AG04450 (cell line): ENCODE measurements at regions of chr14 and their contacts with region 1.

Region 1: DNA sequence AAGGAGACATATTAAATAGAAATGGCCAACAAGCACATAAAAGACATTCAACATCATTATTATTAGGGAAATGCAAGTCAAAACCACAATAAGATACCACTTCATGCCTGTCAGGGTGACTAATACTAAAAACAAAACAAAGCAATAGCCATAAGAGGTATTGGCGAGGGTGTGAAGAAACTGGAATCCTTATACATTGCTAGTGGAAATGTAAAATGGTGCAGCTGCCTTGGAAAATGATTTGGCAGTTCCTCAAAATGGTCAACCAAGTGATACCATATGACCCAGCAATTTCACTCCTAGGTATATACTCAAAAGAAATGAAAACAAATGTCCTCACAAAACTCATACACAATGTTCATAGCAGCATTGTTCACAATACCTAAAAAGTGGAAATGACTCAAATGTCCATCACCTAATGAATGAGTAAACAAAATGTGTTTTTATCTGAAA is 27.0 kb downstream of the GPR135 start:
- DNase-seq: no peak
- H3K4me3 ChIP-seq: no peak overlapping the region
- H3K27ac ChIP-seq: no peak overlapping the region
- H3K27me3 ChIP-seq: no peaks in the 10 kb centered on the region
- CTCF ChIP-seq: no peak

Region 2: GRCh38 chr14:59126710-59127432 is 311.4 kb before region 1 on chr14:
- CTCF ChIA-PET with region 1: interaction called, 93 read pairs
- POLR2A ChIA-PET with region 1: interaction called, 4 read pairs
- DNase-seq: no peak
- H3K4me3 ChIP-seq: no peak overlapping the region
- H3K27ac ChIP-seq: no peak overlapping the region
- H3K27me3 ChIP-seq: no peaks in the 10 kb centered on the region
- CTCF ChIP-seq: peak; percentile 75

Region 3: DNA sequence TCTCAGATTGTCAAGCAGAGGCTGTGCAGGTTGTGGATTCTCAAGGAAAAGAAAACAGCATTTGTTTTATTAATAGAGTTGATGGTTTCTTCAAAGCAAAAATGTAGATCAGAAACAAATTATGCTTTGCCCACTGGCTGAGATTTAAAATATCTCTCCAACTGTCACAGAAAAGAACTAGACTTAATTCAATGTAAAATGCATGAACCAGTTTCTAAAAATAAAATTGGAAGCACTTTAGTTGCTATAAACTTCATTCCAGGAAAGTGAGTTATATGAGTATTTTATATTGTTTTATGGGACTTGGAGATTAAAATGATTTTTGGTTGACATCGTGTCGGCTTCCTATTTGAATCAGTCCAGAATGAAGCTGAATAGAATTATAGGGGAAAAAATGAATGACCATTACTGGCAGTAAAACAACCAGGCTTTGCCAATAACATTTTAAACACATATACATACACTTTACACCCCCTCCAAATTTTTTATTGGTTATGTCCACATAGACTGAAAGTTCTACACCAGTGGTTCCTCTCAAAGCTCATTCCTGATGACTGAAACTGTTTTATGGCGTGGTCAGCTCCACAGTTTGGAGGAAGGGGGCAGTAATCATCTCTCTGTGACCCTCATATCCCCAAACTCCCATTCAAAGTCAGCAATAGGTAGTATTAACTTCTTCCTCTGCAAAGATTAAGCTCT is 305.3 kb before region 1 on chr14:
- CTCF ChIA-PET with region 1: interaction called, 70 read pairs
- POLR2A ChIA-PET with region 1: interaction called, 4 read pairs
- DNase-seq: no peak
- H3K4me3 ChIP-seq: no peak overlapping the region
- H3K27ac ChIP-seq: no peak overlapping the region
- H3K27me3 ChIP-seq: peaks cover 6% of the 10 kb centered on the region
- CTCF ChIP-seq: peak; percentile 32

Region 4: GRCh38 chr14:59454131-59454530 is 15.9 kb after region 1 on chr14:
- CTCF ChIA-PET with region 1: no interaction called
- POLR2A ChIA-PET with region 1: no interaction called
- DNase-seq: peak; percentile 76
- H3K4me3 ChIP-seq: no peak overlapping the region
- H3K27ac ChIP-seq: no peak overlapping the region
- H3K27me3 ChIP-seq: no peaks in the 10 kb centered on the region
- CTCF ChIP-seq: no peak

Region 5: GRCh38 chr14:59534361-59534987 is 96.3 kb after region 1 on chr14:
- CTCF ChIA-PET with region 1: no interaction called
- POLR2A ChIA-PET with region 1: no interaction called
- DNase-seq: no peak
- H3K4me3 ChIP-seq: no peak overlapping the region
- H3K27ac ChIP-seq: no peak overlapping the region
- H3K27me3 ChIP-seq: no peaks in the 10 kb centered on the region
- CTCF ChIP-seq: no peak